PC-9 (cell line): ENCODE measurements at regions of chr10 and their contacts with region 1.

Region 1: DNA sequence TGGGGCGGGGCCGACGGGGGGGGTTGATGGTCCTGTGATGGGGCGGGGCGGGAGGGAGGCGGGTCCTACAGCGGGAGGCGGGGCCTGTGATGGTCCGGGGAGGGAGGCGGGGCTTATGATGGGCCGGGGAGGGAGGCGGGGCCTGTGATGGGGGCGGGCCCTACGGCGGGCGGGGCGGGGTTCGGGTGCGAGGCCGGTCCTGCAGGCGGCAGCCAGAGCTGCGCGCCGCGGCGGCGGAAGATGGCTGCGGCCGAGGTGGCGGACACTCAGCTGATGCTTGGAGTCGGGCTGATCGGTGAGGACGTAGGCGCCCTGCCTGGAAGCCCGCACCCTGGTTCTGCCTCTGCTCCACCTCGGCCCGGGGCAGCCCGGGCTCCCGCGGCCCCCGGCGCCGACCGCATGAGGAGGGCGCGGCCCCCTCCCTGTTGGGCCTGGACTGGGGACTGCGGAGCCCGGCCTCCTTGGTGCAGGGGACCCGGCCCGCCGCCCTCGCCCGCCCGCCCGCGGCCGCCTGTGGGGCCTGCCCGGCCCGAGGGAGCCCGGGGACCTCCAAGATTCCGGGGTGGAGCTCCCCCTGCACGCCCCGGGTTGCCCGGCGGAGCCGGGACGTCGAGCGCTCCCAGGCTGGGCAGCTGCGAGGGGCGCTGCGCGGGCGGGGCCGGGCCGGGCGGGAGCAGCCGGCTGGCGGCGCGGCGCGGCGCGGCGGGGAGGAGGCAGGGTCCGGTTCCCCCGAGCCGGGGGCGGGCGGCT is at the start of gene DENND10:
- DNase-seq: peak in 1 of 2 experiments; percentile 56
- H3K4me3 ChIP-seq: peak within 1 kb of the TSS; percentile 74
- H3K27ac ChIP-seq: no peak within 1 kb of the TSS
- H3K4me1 ChIP-seq: peaks cover 25% of the 10 kb centered on the region
- H3K27me3 ChIP-seq: no peaks in the 10 kb centered on the region
- CTCF ChIP-seq: no peak
- total RNA-seq, gene DENND10: 30.1 and 31.8 TPM in 2 replicates

Region 2: DNA sequence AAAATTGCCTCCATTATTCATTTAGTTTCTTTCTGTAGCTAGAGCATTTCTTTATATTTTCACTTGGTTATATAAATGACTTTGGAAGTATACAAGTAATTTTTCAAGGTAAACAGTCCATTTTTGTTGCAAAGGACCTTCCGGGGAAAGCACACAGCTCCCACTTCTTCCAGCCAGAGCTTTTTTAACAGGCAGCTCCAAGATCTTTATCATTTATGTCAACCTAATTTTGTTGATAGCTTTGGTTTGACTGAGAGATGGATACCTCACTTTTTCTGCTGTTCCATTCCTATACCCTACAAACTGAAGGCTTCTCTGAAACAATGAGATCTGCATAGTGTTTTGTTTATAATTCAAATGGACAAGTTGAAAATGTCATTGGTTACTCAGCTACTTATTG is 1008.1 kb before region 1 on chr10:
- CTCF ChIA-PET with region 1: no interaction called
- POLR2A ChIA-PET with region 1: no interaction called
- intact Hi-C with region 1: no loop called
- DNase-seq: no peak
- H3K4me3 ChIP-seq: no peak overlapping the region
- H3K27ac ChIP-seq: no peak overlapping the region
- H3K4me1 ChIP-seq: no peaks in the 10 kb centered on the region
- H3K27me3 ChIP-seq: no peaks in the 10 kb centered on the region
- CTCF ChIP-seq: no peak

Region 3: DNA sequence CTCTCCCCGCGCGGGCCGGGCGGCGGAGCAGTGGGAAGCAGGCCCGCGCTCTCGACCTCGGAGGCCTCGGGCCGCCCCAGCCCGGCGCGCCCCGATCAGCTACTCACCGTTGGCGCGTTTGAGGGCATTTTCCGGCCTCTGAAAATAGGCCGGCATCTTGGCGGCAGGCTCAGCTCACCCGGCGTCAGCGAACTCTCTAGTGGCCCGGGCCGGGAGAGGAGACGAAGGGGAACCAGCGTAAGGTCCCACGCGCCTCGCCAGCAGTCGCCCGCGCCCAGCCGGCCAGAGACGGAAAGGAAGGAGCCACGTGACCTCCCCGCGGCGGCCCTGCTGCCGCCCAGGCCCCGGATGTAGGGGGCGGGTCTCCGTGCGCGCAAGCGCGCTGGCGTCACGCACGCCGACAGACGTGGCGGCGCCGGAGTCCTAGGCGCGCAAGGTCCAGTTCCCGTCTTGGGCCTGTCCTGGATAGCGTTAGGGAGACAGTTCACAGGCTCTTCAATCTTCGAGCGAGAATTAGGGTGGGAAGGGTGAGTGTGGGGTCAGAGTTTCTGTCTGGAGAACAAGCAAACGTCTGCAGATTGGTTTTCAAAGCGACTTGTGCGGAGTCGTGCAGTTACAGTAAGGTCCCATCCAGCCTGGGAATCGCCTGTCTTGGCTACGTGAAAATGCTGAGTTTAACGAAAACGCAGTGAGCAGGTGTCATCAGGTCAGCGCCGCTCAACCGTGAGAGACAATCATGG is 23.4 kb before region 1 on chr10 and contains the start of gene EIF3A:
- CTCF ChIA-PET with region 1: interaction called, 3 read pairs
- POLR2A ChIA-PET with region 1: interaction called, 3 read pairs
- intact Hi-C with region 1: loop called (anchors 2 kb)
- DNase-seq: peak; percentile 69 to 87
- H3K4me3 ChIP-seq: peak within 1 kb of the TSS; percentile 84
- H3K27ac ChIP-seq: peak within 1 kb of the TSS; percentile 78
- H3K4me1 ChIP-seq: peaks cover 10% of the 10 kb centered on the region
- H3K27me3 ChIP-seq: no peaks in the 10 kb centered on the region
- CTCF ChIP-seq: no peak
- total RNA-seq, gene EIF3A: 85.5 and 102 TPM in 2 replicates

Region 4: DNA sequence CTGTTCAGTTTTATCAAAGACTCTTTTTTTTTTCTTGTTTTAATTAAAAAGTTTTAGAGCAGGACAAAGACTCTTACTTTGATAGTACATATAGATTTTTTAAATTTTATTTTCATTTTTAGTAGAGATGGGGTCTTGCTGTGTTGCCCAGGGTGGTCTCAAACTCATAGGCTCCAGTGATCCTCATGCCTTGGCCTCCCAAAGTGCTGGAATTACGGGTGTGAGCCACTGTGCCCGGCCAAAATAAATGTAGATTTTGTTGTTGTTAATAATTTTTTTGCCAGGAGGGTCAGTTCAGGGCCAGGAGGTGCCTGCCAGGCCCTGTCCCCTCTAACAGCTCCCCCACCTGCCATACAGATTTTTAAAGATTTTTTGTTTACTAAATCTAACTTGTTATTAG is 16.8 kb after region 1 on chr10:
- CTCF ChIA-PET with region 1: interaction called, 27 read pairs
- POLR2A ChIA-PET with region 1: no interaction called
- intact Hi-C with region 1: no loop called
- DNase-seq: no peak
- H3K4me3 ChIP-seq: no peak overlapping the region
- H3K27ac ChIP-seq: no peak overlapping the region
- H3K4me1 ChIP-seq: no peaks in the 10 kb centered on the region
- H3K27me3 ChIP-seq: no peaks in the 10 kb centered on the region
- CTCF ChIP-seq: no peak

Region 5: GRCh38 chr10:119165171-119166110 is 61.4 kb after region 1 on chr10 and contains the start of gene SFXN4:
- CTCF ChIA-PET with region 1: no interaction called
- POLR2A ChIA-PET with region 1: interaction called, 15 read pairs
- intact Hi-C with region 1: no loop called
- DNase-seq: peak in 1 of 2 experiments; percentile 65
- H3K4me3 ChIP-seq: peak within 1 kb of the TSS; percentile 84
- H3K27ac ChIP-seq: peak within 1 kb of the TSS; percentile 68
- H3K4me1 ChIP-seq: 0 out of 2 replicates have a peak, but pooled peaks cover 8% of the 10 kb centered on the region
- H3K27me3 ChIP-seq: no peaks in the 10 kb centered on the region
- CTCF ChIP-seq: no peak
- total RNA-seq, gene SFXN4: 15.4 and 18.3 TPM in 2 replicates

Region 6: DNA sequence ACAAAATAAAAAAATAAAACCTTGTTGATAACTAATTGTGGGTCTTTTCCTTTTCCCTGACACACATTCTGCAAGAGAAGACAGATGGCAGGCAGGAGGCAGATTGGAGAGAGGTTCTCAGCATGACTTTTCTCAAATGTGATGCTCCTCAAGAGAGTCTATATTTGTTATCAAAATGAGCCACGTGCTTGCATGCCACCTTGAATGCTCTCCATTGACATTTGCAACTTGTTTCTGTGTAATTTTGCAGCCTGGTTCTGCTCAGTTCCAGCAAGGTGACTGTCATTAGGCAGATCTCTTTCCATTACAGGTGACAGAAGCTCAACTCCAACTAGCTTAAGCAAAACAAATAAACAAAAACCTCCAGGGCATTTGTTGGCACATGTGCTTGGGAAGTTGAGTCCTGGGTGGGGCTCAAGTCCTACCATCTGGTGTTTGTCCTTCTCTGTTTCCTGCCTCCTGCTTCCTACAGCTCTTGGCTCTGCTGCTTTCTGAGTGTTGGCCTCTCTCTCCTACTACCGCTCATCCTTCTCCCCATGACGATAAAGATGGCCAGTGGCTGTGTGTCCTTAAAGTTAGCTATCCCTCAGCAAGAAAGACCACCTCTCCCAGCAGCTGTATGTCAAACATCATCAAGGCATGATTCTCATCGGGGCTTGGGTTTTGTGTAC is 160.0 kb after region 1 on chr10:
- CTCF ChIA-PET with region 1: no interaction called
- POLR2A ChIA-PET with region 1: no interaction called
- intact Hi-C with region 1: no loop called
- DNase-seq: no peak
- H3K4me3 ChIP-seq: no peak overlapping the region
- H3K27ac ChIP-seq: no peak overlapping the region
- H3K4me1 ChIP-seq: peaks cover 9% of the 10 kb centered on the region
- H3K27me3 ChIP-seq: no peaks in the 10 kb centered on the region
- CTCF ChIP-seq: no peak